Panc1 (cell line): ENCODE measurements at regions of chr7 and their contacts with region 1.

Region 1: GRCh38 chr7:5567790-5568189 is 144.2 kb upstream of the TNRC18 start:
- DNase-seq: no peak
- ATAC-seq: no peak
- H3K4me3 ChIP-seq: no peak overlapping the region
- H3K27ac ChIP-seq: peak overlapping the region; percentile 6; the same call in 1 of the 2 replicates
- H3K4me1 ChIP-seq: peaks cover 14% of the 10 kb centered on the region
- H3K27me3 ChIP-seq: no peaks in the 10 kb centered on the region
- CTCF ChIP-seq: no peak

Region 2: GRCh38 chr7:5692112-5692844 is 124.5 kb after region 1 on chr7:
- CTCF ChIA-PET with region 1: interaction called, 13 read pairs
- POLR2A ChIA-PET with region 1: no interaction called
- in situ Hi-C with region 1: no loop called
- intact Hi-C with region 1: no loop called
- DNase-seq: peak; percentile 83
- ATAC-seq: peak; percentile 79
- H3K4me3 ChIP-seq: no peak overlapping the region
- H3K27ac ChIP-seq: peak overlapping the region; percentile 60
- H3K4me1 ChIP-seq: peaks cover 35% of the 10 kb centered on the region
- H3K27me3 ChIP-seq: no peaks in the 10 kb centered on the region
- CTCF ChIP-seq: no peak

Region 3: GRCh38 chr7:5699467-5700384 is 131.9 kb after region 1 on chr7:
- CTCF ChIA-PET with region 1: no interaction called
- POLR2A ChIA-PET with region 1: interaction called, 14 read pairs
- in situ Hi-C with region 1: no loop called
- intact Hi-C with region 1: no loop called
- DNase-seq: no peak
- ATAC-seq: no peak
- H3K4me3 ChIP-seq: no peak overlapping the region
- H3K27ac ChIP-seq: no peak overlapping the region
- H3K4me1 ChIP-seq: no peaks in the 10 kb centered on the region; the same call in 1 of the 2 replicates
- H3K27me3 ChIP-seq: no peaks in the 10 kb centered on the region
- CTCF ChIP-seq: no peak